Naive thymus-derived CD4-positive, alpha-beta T cell (primary cell): ENCODE measurements at regions of chr22 and their contacts with region 1.

Region 1: DNA sequence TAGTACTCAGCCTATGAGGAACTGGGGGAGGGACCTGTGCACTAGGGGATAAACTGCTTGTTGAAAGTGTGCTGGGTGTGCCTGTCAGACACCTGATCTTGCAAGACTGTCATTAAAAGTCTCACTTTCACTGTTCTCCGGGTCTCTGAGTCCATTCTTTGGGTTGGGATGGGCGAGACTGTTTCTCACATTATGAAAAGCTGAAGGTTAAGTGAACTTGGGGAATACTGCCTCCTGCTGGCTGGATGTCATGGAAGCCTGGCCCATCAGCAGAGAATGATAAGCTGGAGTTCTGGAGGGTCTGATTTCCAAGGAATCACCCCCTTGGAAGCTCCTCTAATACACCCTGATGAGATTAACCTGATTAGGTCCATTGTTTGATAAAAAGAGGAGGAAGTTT is 9.0 kb upstream of the VPREB1 start:
- DNase-seq: peak in 7 of 9 donors; percentile 18 to 53 (median 21)
- ATAC-seq: peak; percentile 38
- H3K4me3 ChIP-seq: no peak overlapping the region
- H3K4me3 Mint-ChIP-seq: no peak overlapping the region
- H3K27ac ChIP-seq: no peak overlapping the region
- H3K27ac Mint-ChIP-seq: peak overlapping the region in 1 of 9 donors; percentile 15
- H3K4me1 ChIP-seq: no peaks in the 10 kb centered on the region
- H3K4me1 Mint-ChIP-seq: peaks cover 0 to 15% (median 0%) of the 10 kb centered on the region in 7 donors
- H3K27me3 ChIP-seq: no peaks in the 10 kb centered on the region
- H3K27me3 Mint-ChIP-seq: peaks cover 0 to 7% (median 4%) of the 10 kb centered on the region in 5 donors

Region 2: GRCh38 chr22:22156716-22157347 is 78.7 kb before region 1 on chr22:
- CTCF ChIA-PET with region 1: interaction called, 3 read pairs
- POLR2A ChIA-PET with region 1: no interaction called
- intact Hi-C with region 1: loop called in 1 of 2 experiments (anchors 1 kb)
- DNase-seq: peak; percentile 24 to 66 (median 57)
- ATAC-seq: peak; percentile 93
- H3K4me3 ChIP-seq: no peak overlapping the region
- H3K4me3 Mint-ChIP-seq: peak overlapping the region in 3 of 10 donors; percentile 18 to 42 (median 21)
- H3K27ac ChIP-seq: no peak overlapping the region
- H3K27ac Mint-ChIP-seq: no peak overlapping the region
- H3K4me1 ChIP-seq: no peaks in the 10 kb centered on the region
- H3K4me1 Mint-ChIP-seq: peaks cover 0 to 8% (median 6%) of the 10 kb centered on the region in 7 donors
- H3K27me3 ChIP-seq: no peaks in the 10 kb centered on the region
- H3K27me3 Mint-ChIP-seq: peaks cover 6 to 17% (median 13%) of the 10 kb centered on the region in 5 donors

Region 3: GRCh38 chr22:22201185-22201929 is 34.2 kb before region 1 on chr22:
- CTCF ChIA-PET with region 1: interaction called, 42 read pairs
- POLR2A ChIA-PET with region 1: no interaction called
- intact Hi-C with region 1: no loop called
- DNase-seq: peak in 5 of 9 donors; percentile 30 to 66 (median 40)
- ATAC-seq: peak; percentile 54
- H3K4me3 ChIP-seq: no peak overlapping the region
- H3K4me3 Mint-ChIP-seq: no peak overlapping the region
- H3K27ac ChIP-seq: no peak overlapping the region
- H3K27ac Mint-ChIP-seq: no peak overlapping the region
- H3K4me1 ChIP-seq: no peaks in the 10 kb centered on the region
- H3K4me1 Mint-ChIP-seq: peaks cover 0 to 4% (median 0%) of the 10 kb centered on the region in 7 donors
- H3K27me3 ChIP-seq: no peaks in the 10 kb centered on the region
- H3K27me3 Mint-ChIP-seq: peaks cover 7 to 34% (median 22%) of the 10 kb centered on the region in 5 donors

Region 4: GRCh38 chr22:22207845-22208564 is 27.6 kb before region 1 on chr22:
- CTCF ChIA-PET with region 1: interaction called, 42 read pairs
- POLR2A ChIA-PET with region 1: interaction called, 4 read pairs
- intact Hi-C with region 1: loop called (anchors 1 kb)
- DNase-seq: peak; percentile 37 to 87 (median 63)
- ATAC-seq: peak; percentile 90
- H3K4me3 ChIP-seq: no peak overlapping the region
- H3K4me3 Mint-ChIP-seq: peak overlapping the region in 6 of 10 donors; percentile 3 to 64 (median 50)
- H3K27ac ChIP-seq: no peak overlapping the region
- H3K27ac Mint-ChIP-seq: peak overlapping the region in 8 of 9 donors; percentile 11 to 75 (median 38)
- H3K4me1 ChIP-seq: peaks cover 4 to 9% of the 10 kb centered on the region in 2 donors
- H3K4me1 Mint-ChIP-seq: peaks cover 9 to 35% (median 28%) of the 10 kb centered on the region in 7 donors
- H3K27me3 ChIP-seq: no peaks in the 10 kb centered on the region
- H3K27me3 Mint-ChIP-seq: peaks cover 0 to 4% (median 0%) of the 10 kb centered on the region in 5 donors